CD4-positive, alpha-beta memory T cell (primary cell): ENCODE measurements at regions of chr6 and their contacts with region 1.

Region 1: DNA sequence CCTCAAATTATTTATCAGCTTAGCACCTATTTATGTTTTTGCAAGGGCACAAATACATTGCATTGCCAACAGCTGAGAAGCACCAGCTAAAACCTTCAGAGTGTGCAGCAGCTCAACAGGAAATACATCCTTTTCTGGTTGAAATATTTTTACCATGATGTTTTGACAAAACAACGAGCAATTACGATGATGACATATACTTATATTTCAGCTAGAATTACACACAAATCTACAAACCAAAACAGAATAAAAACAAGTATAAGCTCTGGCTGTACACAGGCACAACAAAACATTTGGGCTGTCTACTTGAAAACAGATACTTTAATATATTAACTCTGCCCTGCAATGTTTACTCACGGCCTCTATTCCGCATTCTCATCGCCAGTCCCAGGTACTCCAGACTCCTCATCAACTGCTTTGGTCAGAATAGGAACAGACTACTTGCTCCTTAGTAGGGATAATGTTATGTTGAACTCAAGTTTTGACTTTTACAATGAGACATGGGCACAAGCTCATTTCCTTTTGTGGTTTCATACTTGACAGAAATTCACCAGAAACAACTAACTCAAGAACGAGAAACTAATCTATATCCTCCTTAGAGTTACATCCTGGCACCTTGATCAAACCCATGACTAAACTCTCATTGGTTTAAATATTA is 377.6 kb downstream of the ESR1 start:
- DNase-seq: peak; percentile 46 to 66 (median 62)
- H3K4me3 ChIP-seq: peak overlapping the region; percentile 39 to 76
- H3K4me3 Mint-ChIP-seq: peak overlapping the region; percentile 87 to 98 (median 96)
- H3K27ac ChIP-seq: peak overlapping the region; percentile 77
- H3K27ac Mint-ChIP-seq: peak overlapping the region; percentile 90 to 99 (median 98)
- H3K4me1 ChIP-seq: peaks cover 54% of the 10 kb centered on the region
- H3K4me1 Mint-ChIP-seq: peaks cover 50 to 85% (median 68%) of the 10 kb centered on the region in 4 donors
- H3K27me3 ChIP-seq: no peaks in the 10 kb centered on the region
- H3K27me3 Mint-ChIP-seq: no peaks in the 10 kb centered on the region

Region 2: GRCh38 chr6:151690768-151691562 is 494.1 kb before region 1 on chr6:
- CTCF ChIA-PET with region 1: interaction called, 4 read pairs
- POLR2A ChIA-PET with region 1: interaction called, 12 read pairs
- intact Hi-C with region 1: no loop called
- DNase-seq: peak in 4 of 5 donors; percentile 33 to 48 (median 36)
- H3K4me3 ChIP-seq: peak overlapping the region; percentile 24 to 46
- H3K4me3 Mint-ChIP-seq: peak overlapping the region; percentile 74 to 89 (median 86)
- H3K27ac ChIP-seq: peak overlapping the region; percentile 37
- H3K27ac Mint-ChIP-seq: peak overlapping the region; percentile 76 to 90 (median 81)
- H3K4me1 ChIP-seq: peaks cover 11% of the 10 kb centered on the region
- H3K4me1 Mint-ChIP-seq: peaks cover 9 to 27% (median 24%) of the 10 kb centered on the region in 4 donors
- H3K27me3 ChIP-seq: no peaks in the 10 kb centered on the region
- H3K27me3 Mint-ChIP-seq: no peaks in the 10 kb centered on the region

Region 3: DNA sequence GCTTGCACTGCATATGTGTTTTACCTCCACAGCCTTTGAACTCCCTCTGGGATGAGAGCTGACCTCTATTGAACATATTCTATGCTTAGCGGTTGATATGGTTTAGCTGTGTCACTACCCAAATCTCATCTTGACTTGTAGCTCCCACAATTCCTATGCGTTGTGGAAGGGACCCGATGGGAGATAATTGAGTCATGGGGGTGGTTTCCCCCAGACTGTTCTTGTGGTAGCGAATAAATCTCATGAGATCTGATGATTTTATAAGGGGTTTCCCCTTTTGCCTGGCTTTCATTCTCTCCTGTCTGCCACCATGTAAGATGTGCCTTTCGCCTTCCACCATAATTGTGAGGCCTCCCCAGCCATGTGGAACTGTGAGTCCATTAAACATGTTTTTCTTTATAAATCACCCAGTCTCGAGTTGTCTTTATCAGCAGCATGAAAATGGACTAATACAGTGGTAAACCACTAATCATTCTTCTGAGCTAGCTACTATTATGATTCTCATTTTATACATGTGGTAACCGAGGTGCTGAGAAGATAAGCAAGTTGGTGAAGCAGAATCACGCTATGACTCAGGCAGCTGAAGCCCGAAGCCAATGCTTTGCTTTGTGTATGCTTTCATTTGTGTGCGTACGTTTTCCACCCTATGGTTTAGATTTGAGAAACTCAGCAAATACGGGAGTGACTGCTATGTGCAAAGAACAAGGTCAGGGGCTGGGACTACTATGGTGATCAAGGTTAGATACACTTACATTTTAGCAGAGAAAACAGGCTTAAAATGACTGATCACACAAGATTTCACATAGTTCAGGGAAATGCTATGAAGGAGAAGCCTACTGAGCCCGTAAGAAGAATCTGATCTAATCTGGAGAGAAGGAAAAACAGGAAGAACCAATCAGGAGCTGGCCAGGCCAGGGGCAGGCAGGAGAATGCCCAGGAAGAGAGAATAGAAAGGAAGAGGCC is 14.1 kb before region 1 on chr6:
- CTCF ChIA-PET with region 1: interaction called, 20 read pairs
- POLR2A ChIA-PET with region 1: interaction called, 179 read pairs
- intact Hi-C with region 1: loop called (anchors 1 kb)
- DNase-seq: peak; percentile 54 to 85 (median 60)
- H3K4me3 ChIP-seq: peak overlapping the region; percentile 41 to 44
- H3K4me3 Mint-ChIP-seq: peak overlapping the region; percentile 43 to 84 (median 76)
- H3K27ac ChIP-seq: peak overlapping the region; percentile 71
- H3K27ac Mint-ChIP-seq: peak overlapping the region; percentile 86 to 97 (median 94)
- H3K4me1 ChIP-seq: peaks cover 47% of the 10 kb centered on the region
- H3K4me1 Mint-ChIP-seq: peaks cover 49 to 62% (median 55%) of the 10 kb centered on the region in 4 donors
- H3K27me3 ChIP-seq: no peaks in the 10 kb centered on the region
- H3K27me3 Mint-ChIP-seq: no peaks in the 10 kb centered on the region

Region 4: GRCh38 chr6:152201120-152201519 is 16.1 kb after region 1 on chr6:
- CTCF ChIA-PET with region 1: interaction called, 5 read pairs
- POLR2A ChIA-PET with region 1: interaction called, 20 read pairs
- intact Hi-C with region 1: loop called (anchors 2 kb)
- DNase-seq: no peak
- H3K4me3 ChIP-seq: no peak overlapping the region
- H3K4me3 Mint-ChIP-seq: no peak overlapping the region
- H3K27ac ChIP-seq: no peak overlapping the region
- H3K27ac Mint-ChIP-seq: no peak overlapping the region
- H3K4me1 ChIP-seq: no peaks in the 10 kb centered on the region
- H3K4me1 Mint-ChIP-seq: peaks cover 5 to 16% (median 11%) of the 10 kb centered on the region in 4 donors
- H3K27me3 ChIP-seq: no peaks in the 10 kb centered on the region
- H3K27me3 Mint-ChIP-seq: no peaks in the 10 kb centered on the region

Region 5: GRCh38 chr6:152220786-152221185 is 35.7 kb after region 1 on chr6:
- CTCF ChIA-PET with region 1: interaction called, 5 read pairs
- POLR2A ChIA-PET with region 1: interaction called, 10 read pairs
- intact Hi-C with region 1: no loop called
- DNase-seq: no peak
- H3K4me3 ChIP-seq: no peak overlapping the region
- H3K4me3 Mint-ChIP-seq: no peak overlapping the region
- H3K27ac ChIP-seq: no peak overlapping the region
- H3K27ac Mint-ChIP-seq: no peak overlapping the region
- H3K4me1 ChIP-seq: no peaks in the 10 kb centered on the region
- H3K4me1 Mint-ChIP-seq: peaks cover 0 to 2% (median 0%) of the 10 kb centered on the region in 4 donors
- H3K27me3 ChIP-seq: no peaks in the 10 kb centered on the region
- H3K27me3 Mint-ChIP-seq: no peaks in the 10 kb centered on the region

Region 6: GRCh38 chr6:152301764-152302568 is 116.9 kb after region 1 on chr6:
- CTCF ChIA-PET with region 1: interaction called, 8 read pairs
- POLR2A ChIA-PET with region 1: interaction called, 34 read pairs
- intact Hi-C with region 1: no loop called
- DNase-seq: peak; percentile 88 to 92 (median 90)
- H3K4me3 ChIP-seq: peak overlapping the region; percentile 78 to 85
- H3K4me3 Mint-ChIP-seq: peak overlapping the region; percentile 99 to 100 (median 100)
- H3K27ac ChIP-seq: peak overlapping the region; percentile 87
- H3K27ac Mint-ChIP-seq: peak overlapping the region; percentile 95 to 100 (median 98)
- H3K4me1 ChIP-seq: peaks cover 40% of the 10 kb centered on the region
- H3K4me1 Mint-ChIP-seq: peaks cover 29 to 47% (median 36%) of the 10 kb centered on the region in 4 donors
- H3K27me3 ChIP-seq: no peaks in the 10 kb centered on the region
- H3K27me3 Mint-ChIP-seq: no peaks in the 10 kb centered on the region